Naive thymus-derived CD4-positive, alpha-beta T cell (primary cell): ENCODE measurements at regions of chr5 and their contacts with region 1.

Region 1: DNA sequence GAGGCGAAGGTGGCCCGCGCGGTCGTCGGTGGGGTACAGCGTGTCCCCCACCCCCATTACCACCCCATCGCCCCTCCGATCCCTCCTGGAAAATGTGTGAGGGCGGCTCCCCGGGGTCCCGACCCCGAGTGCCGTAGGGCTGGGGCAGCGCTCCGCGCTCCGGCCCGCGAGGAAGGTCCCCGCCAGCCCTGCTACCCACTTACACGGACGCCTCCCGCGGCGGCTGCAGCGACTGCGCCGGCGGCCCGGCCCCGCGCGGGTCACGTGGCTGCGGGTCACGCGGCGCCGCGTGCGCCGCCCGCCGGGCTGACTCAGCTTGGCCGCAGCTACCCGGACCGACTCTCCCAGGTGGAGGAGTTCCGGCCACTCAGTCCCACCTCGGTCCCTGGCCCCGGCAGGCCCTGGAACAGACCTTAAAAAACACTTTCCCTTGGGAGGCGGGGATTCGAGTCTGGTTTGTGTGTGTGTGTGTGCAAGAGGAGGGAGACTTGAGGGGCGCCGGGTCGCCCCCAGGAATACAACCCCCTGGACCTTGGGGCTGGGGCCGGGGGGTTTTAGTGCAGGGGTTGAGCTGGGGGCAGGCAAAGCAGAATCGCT is at the start of gene GNPDA1:
- DNase-seq: peak; percentile 38 to 81 (median 54)
- ATAC-seq: peak; percentile 87
- H3K4me3 ChIP-seq: peak within 1 kb of the TSS; percentile 68
- H3K4me3 Mint-ChIP-seq: peak within 1 kb of the TSS; percentile 76 to 93 (median 88)
- H3K27ac ChIP-seq: peak within 1 kb of the TSS; percentile 76
- H3K27ac Mint-ChIP-seq: peak within 1 kb of the TSS; percentile 87 to 93 (median 90)
- H3K4me1 ChIP-seq: peaks cover 40 to 53% of the 10 kb centered on the region in 2 donors
- H3K4me1 Mint-ChIP-seq: peaks cover 34 to 86% (median 80%) of the 10 kb centered on the region in 7 donors
- H3K27me3 ChIP-seq: no peaks in the 10 kb centered on the region
- H3K27me3 Mint-ChIP-seq: no peaks in the 10 kb centered on the region
- total RNA-seq, gene GNPDA1: 13.3 to 60.4 (median 26.4) TPM

Region 2: DNA sequence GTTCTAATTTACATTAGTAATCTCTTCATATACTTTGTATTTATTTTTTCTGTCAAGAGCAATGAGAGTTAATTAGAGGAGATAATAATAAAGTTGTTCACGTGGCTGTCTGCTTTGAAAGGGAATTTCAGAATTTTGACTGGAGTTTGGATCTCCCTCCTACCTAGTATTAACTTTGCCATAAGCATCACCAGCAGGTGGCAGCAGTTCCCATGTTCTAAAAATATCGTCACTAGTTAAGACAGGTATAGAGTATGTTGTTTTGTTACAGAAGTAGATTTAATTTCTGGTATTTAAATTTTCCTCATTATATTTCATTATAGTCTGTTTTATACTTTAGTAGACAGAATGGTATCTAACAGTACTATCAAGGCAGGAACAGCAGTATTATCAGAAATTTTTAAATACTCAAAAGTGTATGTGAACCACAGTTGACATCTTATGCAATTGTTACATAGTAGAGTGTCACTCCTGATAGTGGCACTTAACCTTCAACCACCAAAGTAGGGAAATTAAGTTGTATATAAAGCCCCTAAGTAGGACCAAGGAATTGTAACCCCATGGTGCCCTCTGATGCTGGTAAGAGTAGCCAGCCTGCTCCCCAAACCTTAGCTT is 20.4 kb before region 1 on chr5:
- CTCF ChIA-PET with region 1: interaction called, 29 read pairs
- POLR2A ChIA-PET with region 1: interaction called, 6 read pairs
- intact Hi-C with region 1: loop called (anchors 1 kb)
- DNase-seq: peak; percentile 49 to 77 (median 69)
- ATAC-seq: peak; percentile 88
- H3K4me3 ChIP-seq: no peak overlapping the region
- H3K4me3 Mint-ChIP-seq: no peak overlapping the region
- H3K27ac ChIP-seq: no peak overlapping the region
- H3K27ac Mint-ChIP-seq: peak overlapping the region in 2 of 9 donors; percentile 52 to 71
- H3K4me1 ChIP-seq: no peaks in the 10 kb centered on the region
- H3K4me1 Mint-ChIP-seq: peaks cover 4 to 18% (median 7%) of the 10 kb centered on the region in 7 donors
- H3K27me3 ChIP-seq: no peaks in the 10 kb centered on the region
- H3K27me3 Mint-ChIP-seq: no peaks in the 10 kb centered on the region

Region 3: GRCh38 chr5:142024771-142025304 is 11.9 kb after region 1 on chr5:
- CTCF ChIA-PET with region 1: interaction called, 5 read pairs
- POLR2A ChIA-PET with region 1: interaction called, 49 read pairs
- intact Hi-C with region 1: loop called (anchors 1 kb)
- DNase-seq: peak; percentile 61 to 85 (median 82)
- ATAC-seq: peak; percentile 100
- H3K4me3 ChIP-seq: peak overlapping the region; percentile 62
- H3K4me3 Mint-ChIP-seq: peak overlapping the region; percentile 81 to 97 (median 92)
- H3K27ac ChIP-seq: peak overlapping the region; percentile 79
- H3K27ac Mint-ChIP-seq: peak overlapping the region; percentile 96 to 100 (median 98)
- H3K4me1 ChIP-seq: peaks cover 4 to 11% of the 10 kb centered on the region in 2 donors
- H3K4me1 Mint-ChIP-seq: peaks cover 5 to 20% (median 18%) of the 10 kb centered on the region in 7 donors
- H3K27me3 ChIP-seq: no peaks in the 10 kb centered on the region
- H3K27me3 Mint-ChIP-seq: no peaks in the 10 kb centered on the region

Region 4: GRCh38 chr5:142145106-142145900 is 132.4 kb after region 1 on chr5:
- CTCF ChIA-PET with region 1: interaction called, 82 read pairs
- POLR2A ChIA-PET with region 1: interaction called, 8 read pairs
- intact Hi-C with region 1: loop called (anchors 1 kb)
- DNase-seq: peak in 8 of 9 donors; percentile 38 to 67 (median 58)
- ATAC-seq: peak; percentile 89
- H3K4me3 ChIP-seq: no peak overlapping the region
- H3K4me3 Mint-ChIP-seq: no peak overlapping the region
- H3K27ac ChIP-seq: no peak overlapping the region
- H3K27ac Mint-ChIP-seq: no peak overlapping the region
- H3K4me1 ChIP-seq: no peaks in the 10 kb centered on the region
- H3K4me1 Mint-ChIP-seq: peaks cover 0 to 17% (median 5%) of the 10 kb centered on the region in 7 donors
- H3K27me3 ChIP-seq: no peaks in the 10 kb centered on the region
- H3K27me3 Mint-ChIP-seq: no peaks in the 10 kb centered on the region

Region 5: GRCh38 chr5:143957455-143957854 is 1944.6 kb after region 1 on chr5:
- CTCF ChIA-PET with region 1: no interaction called
- POLR2A ChIA-PET with region 1: no interaction called
- intact Hi-C with region 1: no loop called
- DNase-seq: no peak
- ATAC-seq: no peak
- H3K4me3 ChIP-seq: no peak overlapping the region
- H3K4me3 Mint-ChIP-seq: no peak overlapping the region
- H3K27ac ChIP-seq: no peak overlapping the region
- H3K27ac Mint-ChIP-seq: no peak overlapping the region
- H3K4me1 ChIP-seq: no peaks in the 10 kb centered on the region
- H3K4me1 Mint-ChIP-seq: no peaks in the 10 kb centered on the region
- H3K27me3 ChIP-seq: no peaks in the 10 kb centered on the region
- H3K27me3 Mint-ChIP-seq: peaks cover 0 to 15% (median 7%) of the 10 kb centered on the region in 5 donors